ENCODE measurements at regions of chr1 and their contacts with region 1.

Region 1: GRCh38 chr1:246608616-246609376 is 42.5 kb downstream of the CNST start:
- DNase-seq: peak; percentile 99
- H3K4me3 Mint-ChIP-seq: peak overlapping the region; percentile 66
- H3K27ac Mint-ChIP-seq: peak overlapping the region; percentile 95
- H3K4me1 Mint-ChIP-seq: peaks cover 39% of the 10 kb centered on the region
- H3K27me3 Mint-ChIP-seq: no peaks in the 10 kb centered on the region
- CTCF ChIP-seq: no peak

Region 2: DNA sequence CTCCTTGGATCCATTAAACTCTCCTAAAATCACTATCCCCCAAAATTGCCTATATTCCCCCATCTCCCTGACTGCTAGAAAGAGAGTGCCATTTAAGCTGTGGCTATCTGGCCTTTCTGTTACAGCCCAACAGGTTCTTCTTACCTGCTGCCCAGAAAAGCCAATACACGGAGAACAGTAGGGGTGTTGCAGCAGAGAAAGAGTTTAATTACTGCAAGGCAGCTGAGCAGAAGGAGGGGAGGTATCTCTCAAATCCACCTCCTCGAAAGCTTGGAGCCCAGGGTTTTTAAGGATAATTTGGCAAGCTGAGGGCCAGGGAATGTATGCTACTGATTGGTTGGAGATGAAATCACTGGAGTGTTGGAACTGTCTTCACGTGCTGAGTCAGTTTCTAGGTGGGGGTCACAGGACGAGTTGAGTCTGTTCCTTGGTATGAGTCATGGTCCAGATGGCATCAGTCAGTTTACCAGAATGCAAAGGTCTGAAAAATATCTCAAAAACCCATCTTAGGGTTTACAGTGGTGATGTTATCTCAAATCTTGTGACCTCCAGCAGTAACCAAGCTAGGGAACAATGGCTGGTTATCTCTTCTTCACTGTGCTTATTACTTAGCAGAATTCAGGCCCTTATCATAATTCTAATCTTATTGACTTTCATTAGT is 191.5 kb before region 1 on chr1:
- CTCF ChIA-PET with region 1: no interaction called
- POLR2A ChIA-PET with region 1: no interaction called
- intact Hi-C with region 1: no loop called
- DNase-seq: no peak
- H3K4me3 Mint-ChIP-seq: no peak overlapping the region
- H3K27ac Mint-ChIP-seq: no peak overlapping the region
- H3K4me1 Mint-ChIP-seq: no peaks in the 10 kb centered on the region
- H3K27me3 Mint-ChIP-seq: no peaks in the 10 kb centered on the region
- CTCF ChIP-seq: no peak

Region 3: DNA sequence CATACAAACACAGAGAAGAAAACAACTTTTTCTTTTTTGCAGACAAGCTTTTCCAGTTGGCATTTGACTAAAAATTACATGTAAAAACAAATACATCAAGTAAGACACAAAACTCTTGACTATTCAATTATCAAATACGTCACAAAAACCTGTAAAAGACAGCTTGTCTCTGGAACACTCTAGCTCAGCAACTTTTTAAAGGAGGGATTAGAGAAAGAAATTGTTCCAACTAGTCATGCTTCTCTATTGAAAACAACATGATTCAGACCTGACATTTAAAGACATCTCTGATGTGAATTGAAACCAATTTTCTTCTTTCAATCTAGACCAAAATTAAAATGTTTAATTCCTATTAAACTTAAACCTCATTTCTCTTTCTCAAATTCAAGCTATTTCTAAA is 132.0 kb before region 1 on chr1:
- CTCF ChIA-PET with region 1: no interaction called
- POLR2A ChIA-PET with region 1: no interaction called
- intact Hi-C with region 1: no loop called
- DNase-seq: no peak
- H3K4me3 Mint-ChIP-seq: no peak overlapping the region
- H3K27ac Mint-ChIP-seq: no peak overlapping the region
- H3K4me1 Mint-ChIP-seq: peaks cover 6% of the 10 kb centered on the region
- H3K27me3 Mint-ChIP-seq: no peaks in the 10 kb centered on the region
- CTCF ChIP-seq: no peak

Region 4: GRCh38 chr1:246597340-246597739 is 11.5 kb before region 1 on chr1:
- CTCF ChIA-PET with region 1: interaction called, 7 read pairs
- POLR2A ChIA-PET with region 1: interaction called, 21 read pairs
- intact Hi-C with region 1: no loop called
- DNase-seq: peak; percentile 56
- H3K4me3 Mint-ChIP-seq: no peak overlapping the region
- H3K27ac Mint-ChIP-seq: no peak overlapping the region
- H3K4me1 Mint-ChIP-seq: no peaks in the 10 kb centered on the region
- H3K27me3 Mint-ChIP-seq: no peaks in the 10 kb centered on the region
- CTCF ChIP-seq: no peak

Region 5: DNA sequence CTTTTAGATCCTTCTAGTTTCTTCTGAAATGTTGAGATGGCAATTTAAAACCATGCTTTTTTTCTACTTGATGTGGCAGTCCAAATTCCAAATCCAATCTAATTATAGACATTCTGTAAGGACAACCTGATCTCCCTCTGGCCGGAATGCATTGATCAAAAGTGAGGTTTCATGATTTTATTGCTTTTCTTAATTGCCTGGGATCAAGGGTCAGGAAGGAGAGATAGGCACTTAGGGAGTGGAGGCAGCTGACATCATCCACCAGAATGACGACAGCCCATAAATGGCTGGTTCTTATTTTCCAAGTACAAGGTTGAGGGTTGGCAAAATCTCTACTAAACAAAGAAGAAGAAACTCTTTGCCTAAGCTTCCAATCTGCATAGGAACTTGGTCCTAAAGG is 69.0 kb after region 1 on chr1:
- CTCF ChIA-PET with region 1: no interaction called
- POLR2A ChIA-PET with region 1: no interaction called
- intact Hi-C with region 1: no loop called
- DNase-seq: no peak
- H3K4me3 Mint-ChIP-seq: no peak overlapping the region
- H3K27ac Mint-ChIP-seq: no peak overlapping the region
- H3K4me1 Mint-ChIP-seq: no peaks in the 10 kb centered on the region
- H3K27me3 Mint-ChIP-seq: no peaks in the 10 kb centered on the region
- CTCF ChIP-seq: no peak